Posterior cingulate gyrus (tissue), 11 donors: ENCODE measurements at regions of chr14 and their contacts with region 1.

Region 1: DNA sequence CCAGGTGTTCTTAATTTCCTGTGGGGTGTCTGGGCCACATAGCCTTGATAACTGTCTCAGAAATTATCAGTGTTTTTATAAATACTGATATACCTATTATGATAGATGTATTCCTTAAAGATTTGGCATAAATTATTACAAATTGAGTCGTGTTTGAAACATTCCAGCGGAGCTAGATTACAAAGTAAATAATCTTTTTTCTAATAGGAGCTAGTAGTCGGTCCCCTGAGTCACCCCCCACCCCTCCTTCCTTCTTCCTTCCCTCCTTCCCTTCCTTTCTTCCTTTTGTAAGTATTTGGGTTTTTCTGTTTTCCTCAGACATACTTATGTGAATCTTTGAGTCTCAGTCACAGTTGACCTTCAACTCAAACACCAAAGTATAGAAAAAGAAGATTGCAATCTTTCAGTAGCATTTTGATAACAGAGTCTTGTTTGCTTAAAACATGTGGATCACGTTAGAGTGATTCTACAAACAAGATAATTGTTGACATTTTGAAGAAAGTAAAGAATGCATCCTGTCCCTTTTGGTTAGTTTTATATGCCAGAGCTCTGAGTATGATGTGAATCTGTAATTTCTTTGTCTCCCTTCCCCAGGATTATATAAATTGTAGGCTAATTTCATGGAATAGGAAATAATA is 263.9 kb downstream of the FUT8 start:
- DNase-seq: no peak

Region 2: DNA sequence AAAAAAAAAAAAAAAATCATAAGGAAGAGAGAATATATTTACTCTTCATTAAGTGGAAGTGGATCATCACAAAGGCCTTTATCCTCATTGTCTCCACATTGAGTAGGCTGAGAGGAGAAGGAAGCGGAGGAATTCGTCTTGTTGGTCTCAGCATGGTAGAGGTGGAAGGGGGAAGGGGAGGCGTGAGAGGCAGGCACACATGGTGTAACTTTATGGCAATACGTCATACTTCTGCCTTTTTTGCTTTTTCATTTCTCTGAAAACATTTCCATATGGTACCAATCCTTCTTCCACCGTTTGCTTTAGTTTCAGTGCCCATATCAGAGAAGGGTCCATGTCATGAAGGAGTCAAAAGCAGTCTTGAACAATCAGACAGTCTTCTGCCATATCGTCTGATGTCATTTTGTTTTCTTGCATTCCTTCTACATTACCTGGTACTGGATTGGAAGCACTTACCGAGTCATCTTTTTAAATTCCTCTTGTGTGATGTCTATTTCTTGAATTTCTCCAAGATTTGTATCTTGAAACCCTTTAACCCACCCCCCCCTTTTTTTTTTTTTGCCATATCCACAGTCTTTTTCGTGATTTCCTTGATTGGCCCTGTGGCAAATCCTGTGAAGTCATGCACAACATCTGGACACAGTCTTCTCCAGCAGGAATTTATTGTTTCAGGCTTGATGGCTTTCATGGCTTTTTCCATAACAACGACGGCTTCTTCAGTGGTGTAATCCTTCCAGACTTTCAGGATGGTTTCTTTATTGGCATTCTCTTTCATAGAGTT is 255.1 kb before region 1 on chr14:
- intact Hi-C with region 1: loop called (anchors 10 kb)
- DNase-seq: no peak

Region 3: DNA sequence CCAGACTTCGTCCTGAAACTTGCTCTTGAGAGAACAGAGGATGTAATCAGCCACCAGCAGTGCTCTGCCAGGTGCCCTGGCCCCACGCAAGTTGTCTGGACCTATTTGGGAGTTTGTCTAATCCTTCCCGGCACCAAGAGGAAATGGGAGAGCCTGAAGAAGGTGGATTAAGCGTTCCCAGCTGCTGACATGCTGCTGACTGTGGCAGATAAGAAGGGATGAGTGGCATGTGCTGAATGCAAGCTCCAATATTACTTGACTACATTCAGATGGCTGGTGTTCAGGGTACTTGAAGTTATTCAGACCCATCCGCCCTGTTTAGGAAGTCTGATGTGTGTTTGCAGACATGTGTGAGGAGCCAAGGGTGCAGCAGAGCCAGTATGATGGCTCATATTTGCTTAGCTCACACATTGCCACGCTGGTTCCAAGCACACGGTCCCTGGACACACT is 369.1 kb after region 1 on chr14:
- intact Hi-C with region 1: no loop called
- DNase-seq: no peak